Activated T-helper 2 cell treated with anti-CD3 and anti-CD28 coated beads, Interferon-gamma antibody, Interleukin-2, Interleukin-4, amounts not matched to agents 10 μg/mL and 5 μg/mL and 100 μg/mL, durations not matched to agents 14 hours and 24 hours and 36 hours (primary cell): ENCODE measurements at regions of chr11 and their contacts with region 1.

Region 1: GRCh38 chr11:118247047-118247446 is 5.1 kb downstream of the MPZL3 start:
- DNase-seq: no peak
- H3K4me3 Mint-ChIP-seq: peak overlapping the region; percentile 56
- H3K27ac Mint-ChIP-seq: peak overlapping the region; percentile 95
- H3K4me1 Mint-ChIP-seq: peaks cover 66% of the 10 kb centered on the region
- H3K27me3 Mint-ChIP-seq: no peaks in the 10 kb centered on the region

Region 2: DNA sequence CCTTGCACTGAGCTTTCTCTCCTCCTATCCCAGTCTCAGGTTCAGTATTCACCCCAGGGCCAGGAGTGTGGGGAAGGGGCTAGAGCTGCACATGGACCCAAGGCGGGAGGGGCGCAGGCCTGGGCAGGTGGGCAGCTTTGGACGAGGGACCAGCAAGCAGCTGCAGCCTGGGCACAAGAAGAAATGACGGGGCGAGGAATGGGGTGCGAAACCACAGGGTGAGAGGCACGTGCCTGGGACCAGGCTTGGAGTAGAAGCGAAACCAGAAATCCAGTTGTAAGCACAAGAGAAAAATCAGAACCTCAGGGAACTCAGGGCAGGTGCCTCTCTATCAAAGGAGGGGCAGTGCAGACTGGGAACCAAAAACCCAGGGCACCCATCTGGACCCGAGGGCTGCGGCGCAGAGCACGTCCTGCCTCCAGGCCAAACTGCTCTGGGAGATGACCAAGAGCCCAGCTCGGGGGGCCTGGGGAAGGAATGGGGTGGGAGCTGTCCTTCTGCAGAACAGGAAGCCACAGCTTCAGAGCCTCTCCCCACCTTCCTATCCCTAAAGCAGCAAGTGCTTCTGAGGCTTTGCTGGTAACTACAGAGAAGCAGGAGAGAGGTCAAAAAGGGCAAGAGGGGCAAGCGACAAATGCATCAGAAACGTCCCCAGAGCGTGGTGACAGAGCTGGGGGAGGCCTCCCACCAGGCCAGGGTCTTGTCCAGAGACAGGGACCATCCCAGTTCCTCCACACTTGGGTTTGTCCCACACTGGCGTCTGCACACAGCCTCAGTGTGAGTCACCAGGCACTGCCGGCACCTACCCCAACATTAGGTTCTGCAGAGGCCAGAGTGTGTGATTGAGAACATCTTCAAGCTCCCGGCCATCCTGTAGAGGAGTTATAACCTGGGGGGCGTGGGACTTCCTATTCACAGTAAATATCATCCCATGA is 188.5 kb before region 1 on chr11:
- intact Hi-C with region 1: no loop called
- DNase-seq: no peak
- H3K4me3 Mint-ChIP-seq: no peak overlapping the region
- H3K27ac Mint-ChIP-seq: no peak overlapping the region
- H3K4me1 Mint-ChIP-seq: peaks cover under 1% of the 10 kb centered on the region
- H3K27me3 Mint-ChIP-seq: peaks cover 8% of the 10 kb centered on the region

Region 3: GRCh38 chr11:118126082-118126838 is 120.8 kb before region 1 on chr11:
- intact Hi-C with region 1: no loop called
- DNase-seq: no peak
- H3K4me3 Mint-ChIP-seq: no peak overlapping the region
- H3K27ac Mint-ChIP-seq: no peak overlapping the region
- H3K4me1 Mint-ChIP-seq: no peaks in the 10 kb centered on the region
- H3K27me3 Mint-ChIP-seq: peaks cover 20% of the 10 kb centered on the region

Region 4: GRCh38 chr11:118227865-118228785 is 18.9 kb before region 1 on chr11:
- intact Hi-C with region 1: loop called (anchors 1 kb)
- DNase-seq: peak; percentile 47
- H3K4me3 Mint-ChIP-seq: peak overlapping the region; percentile 67
- H3K27ac Mint-ChIP-seq: peak overlapping the region; percentile 95
- H3K4me1 Mint-ChIP-seq: peaks cover 52% of the 10 kb centered on the region
- H3K27me3 Mint-ChIP-seq: no peaks in the 10 kb centered on the region

Region 5: GRCh38 chr11:118610804-118611795 is 364.1 kb after region 1 on chr11:
- intact Hi-C with region 1: no loop called
- DNase-seq: peak; percentile 72
- H3K4me3 Mint-ChIP-seq: peak overlapping the region; percentile 57
- H3K27ac Mint-ChIP-seq: no peak overlapping the region
- H3K4me1 Mint-ChIP-seq: peaks cover 18% of the 10 kb centered on the region
- H3K27me3 Mint-ChIP-seq: peaks cover 29% of the 10 kb centered on the region